ENCODE measurements at regions of chr7 and their contacts with region 1.

Region 1: GRCh38 chr7:42931834-42932651 is at the starts of genes MRPL32 and PSMA2:
- DNase-seq: peak; percentile 95 to 99
- H3K4me3 ChIP-seq: peak within 1 kb of the TSS; percentile 81
- H3K27ac ChIP-seq: peak within 1 kb of the TSS; percentile 63
- H3K4me1 ChIP-seq: peaks cover 30% of the 10 kb centered on the region
- H3K27me3 ChIP-seq: no peaks in the 10 kb centered on the region
- CTCF ChIP-seq: no peak
- total RNA-seq, gene MRPL32: 45.5 and 50.6 TPM in 2 replicates
- total RNA-seq, gene PSMA2: 120 and 175 TPM in 2 replicates

Region 2: DNA sequence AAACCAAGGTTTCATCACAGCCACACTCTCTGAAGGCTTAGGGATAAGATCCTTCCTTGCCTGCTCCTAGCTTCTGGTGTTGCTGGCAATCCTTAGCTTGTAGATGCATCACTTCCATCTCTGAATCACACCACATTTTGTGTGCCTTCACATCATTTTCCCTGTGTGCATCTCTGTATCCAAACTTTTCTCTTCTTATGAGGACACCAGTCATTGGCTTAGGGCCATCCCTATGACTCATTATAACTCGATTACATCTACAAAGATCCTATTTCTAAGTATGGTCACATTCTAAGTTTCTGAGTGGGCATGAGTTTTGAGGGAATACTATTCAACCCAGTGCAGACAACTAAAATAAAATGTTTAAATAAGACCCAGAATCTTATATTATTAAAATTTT is 141.8 kb before region 1 on chr7:
- CTCF ChIA-PET with region 1: no interaction called
- POLR2A ChIA-PET with region 1: no interaction called
- intact Hi-C with region 1: no loop called
- DNase-seq: no peak
- H3K4me3 ChIP-seq: no peak overlapping the region
- H3K27ac ChIP-seq: no peak overlapping the region
- H3K4me1 ChIP-seq: no peaks in the 10 kb centered on the region
- H3K27me3 ChIP-seq: peaks cover 16% of the 10 kb centered on the region
- CTCF ChIP-seq: no peak

Region 3: GRCh38 chr7:42886129-42886528 is 45.9 kb before region 1 on chr7:
- CTCF ChIA-PET with region 1: interaction called, 3 read pairs
- POLR2A ChIA-PET with region 1: interaction called, 3 read pairs
- intact Hi-C with region 1: loop called (anchors 2 kb)
- DNase-seq: no peak
- H3K4me3 ChIP-seq: no peak overlapping the region
- H3K27ac ChIP-seq: no peak overlapping the region
- H3K4me1 ChIP-seq: peaks cover 38% of the 10 kb centered on the region
- H3K27me3 ChIP-seq: no peaks in the 10 kb centered on the region
- CTCF ChIP-seq: peak; percentile 58

Region 4: DNA sequence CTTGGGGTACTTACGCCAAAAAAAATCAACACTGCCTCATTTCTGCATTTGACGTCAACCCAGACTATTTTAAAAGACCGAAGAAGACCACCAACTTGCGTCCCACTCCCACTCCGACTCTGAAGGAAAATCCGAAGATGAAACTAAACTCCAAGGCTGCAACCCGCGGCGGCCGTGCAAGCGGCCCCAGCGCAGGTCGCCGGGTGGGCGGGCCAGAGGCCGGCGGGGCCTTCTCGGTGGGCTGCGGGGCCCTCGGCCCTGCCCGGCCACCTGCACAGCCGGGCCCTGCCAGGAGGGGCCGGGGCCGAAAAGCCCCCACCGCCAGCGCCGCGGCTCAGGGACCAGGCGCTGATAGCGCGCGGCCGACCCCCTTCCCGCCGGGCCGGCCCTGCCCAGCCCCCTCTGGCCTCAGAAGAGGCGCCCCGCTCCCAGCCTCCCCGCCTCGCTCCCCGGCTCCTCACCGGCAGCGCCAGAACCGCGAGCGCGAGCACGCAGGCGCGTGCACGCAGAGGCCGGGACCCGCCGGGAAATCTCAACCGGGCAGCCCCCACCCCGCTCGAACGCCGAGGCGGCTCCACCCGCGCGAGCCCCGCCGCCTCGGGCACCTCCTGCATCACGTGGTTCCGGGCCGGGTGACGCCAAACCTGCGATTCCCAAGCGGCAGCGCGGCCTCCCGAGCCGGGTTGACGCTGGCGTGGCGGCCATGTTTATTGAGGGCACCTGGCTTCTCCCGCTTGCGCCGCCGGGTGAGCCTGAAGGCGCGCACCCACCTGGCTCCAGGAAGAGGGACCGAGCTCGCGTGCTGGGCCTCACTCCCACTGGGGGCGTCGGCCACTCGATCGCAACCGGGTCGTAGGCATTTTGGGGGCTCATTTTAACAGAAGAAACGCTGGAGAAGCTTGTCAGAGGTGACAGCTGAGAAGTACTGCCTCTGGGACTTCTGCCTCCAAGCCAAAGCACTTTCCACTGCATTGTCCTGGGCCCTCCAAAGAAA is 20.3 kb before region 1 on chr7 and contains the start of gene C7orf25:
- CTCF ChIA-PET with region 1: interaction called, 4 read pairs
- POLR2A ChIA-PET with region 1: interaction called, 20 read pairs
- intact Hi-C with region 1: loop called (anchors 2 kb)
- DNase-seq: peak; percentile 88 to 99
- H3K4me3 ChIP-seq: peak within 1 kb of the TSS; percentile 85
- H3K27ac ChIP-seq: peak within 1 kb of the TSS; percentile 18
- H3K4me1 ChIP-seq: peaks cover 18% of the 10 kb centered on the region
- H3K27me3 ChIP-seq: no peaks in the 10 kb centered on the region
- CTCF ChIP-seq: no peak
- total RNA-seq, gene C7orf25: 4.9 and 7.3 TPM in 2 replicates

Region 5: DNA sequence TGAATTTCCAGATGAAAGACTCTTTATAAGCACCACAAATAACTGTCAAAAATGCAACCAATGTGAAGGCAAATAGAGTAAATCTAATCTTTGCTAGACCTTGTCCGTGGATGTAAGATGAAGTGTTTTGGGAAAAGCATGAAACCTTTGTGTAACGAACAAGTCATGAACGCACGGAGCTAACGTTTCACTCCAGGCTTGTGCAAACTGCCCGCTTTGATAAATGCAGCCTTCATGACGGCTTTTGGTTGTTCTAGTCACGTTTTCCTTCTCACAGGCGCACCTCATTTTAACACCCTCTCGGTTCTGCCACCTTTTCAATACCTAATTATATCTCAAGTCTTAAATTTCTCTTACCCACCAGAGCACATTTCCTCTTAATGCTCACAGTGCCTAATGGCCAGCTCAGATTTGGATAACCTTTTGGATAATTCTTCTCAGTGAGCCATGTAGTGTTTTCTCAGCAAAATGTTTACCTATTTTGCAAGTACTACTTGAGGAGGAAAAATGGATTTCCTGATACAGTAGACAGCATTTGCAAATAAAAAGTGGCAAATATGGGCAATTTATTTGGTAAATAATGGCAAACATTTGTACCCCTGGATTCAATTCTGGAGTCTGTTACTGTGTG is 243.6 kb after region 1 on chr7:
- CTCF ChIA-PET with region 1: no interaction called
- POLR2A ChIA-PET with region 1: interaction called, 17 read pairs
- intact Hi-C with region 1: no loop called
- DNase-seq: no peak
- H3K4me3 ChIP-seq: no peak overlapping the region
- H3K27ac ChIP-seq: no peak overlapping the region
- H3K4me1 ChIP-seq: no peaks in the 10 kb centered on the region
- H3K27me3 ChIP-seq: peaks cover 78% of the 10 kb centered on the region
- CTCF ChIP-seq: no peak

Measured in PC-9 (cell line).